ENCODE measurements at regions of chr1 and their contacts with region 1.

Region 1: GRCh38 chr1:161427733-161428516 is 60.2 kb upstream of the CFAP126 start:
- DNase-seq: peak; percentile 72
- ATAC-seq: peak; percentile 92
- H3K4me3 ChIP-seq: peak overlapping the region; percentile 62
- H3K27ac ChIP-seq: no peak overlapping the region
- H3K4me1 ChIP-seq: no peaks in the 10 kb centered on the region
- H3K27me3 ChIP-seq: no peaks in the 10 kb centered on the region
- CTCF ChIP-seq: no peak
- EP300 ChIP-seq: no peak; a peak in 1 of 4 replicates
- POLR2A ChIP-seq: no peak
- RAD21 ChIP-seq: no peak

Region 2: DNA sequence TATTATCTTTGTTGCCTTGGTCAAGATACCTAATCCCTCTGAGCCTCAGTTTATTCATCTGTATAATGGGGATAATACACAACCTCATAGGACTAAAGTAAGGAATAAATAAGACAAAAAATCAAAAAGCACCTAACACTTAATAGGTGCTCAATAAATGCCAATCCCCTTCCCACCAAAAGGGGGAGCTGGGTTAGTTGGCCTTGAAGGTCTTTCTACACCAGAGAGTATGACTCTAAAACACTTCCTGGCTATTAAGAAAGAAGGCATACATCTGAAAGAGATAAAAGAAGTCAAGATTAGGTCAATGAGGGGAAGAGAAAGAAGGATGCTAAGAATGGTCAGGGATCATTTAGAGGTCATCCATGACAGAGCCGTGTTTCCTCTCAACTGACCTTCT is 1576.5 kb before region 1 on chr1:
- CTCF ChIA-PET with region 1: no interaction called
- POLR2A ChIA-PET with region 1: no interaction called
- RAD21 ChIA-PET with region 1: no interaction called
- SMC1A ChIA-PET with region 1: no interaction called
- in situ Hi-C with region 1: no loop called
- intact Hi-C with region 1: no loop called
- DNase-seq: no peak
- ATAC-seq: no peak
- H3K4me3 ChIP-seq: no peak overlapping the region
- H3K27ac ChIP-seq: no peak overlapping the region
- H3K4me1 ChIP-seq: no peaks in the 10 kb centered on the region
- H3K27me3 ChIP-seq: peaks cover 2 to 8% of the 10 kb centered on the region in 2 experiments; a peak in 3 of 4 replicates
- CTCF ChIP-seq: peak in 1 of 3 experiments; percentile 7; a peak in 1 of 6 replicates
- EP300 ChIP-seq: no peak
- POLR2A ChIP-seq: no peak
- RAD21 ChIP-seq: no peak

Region 3: DNA sequence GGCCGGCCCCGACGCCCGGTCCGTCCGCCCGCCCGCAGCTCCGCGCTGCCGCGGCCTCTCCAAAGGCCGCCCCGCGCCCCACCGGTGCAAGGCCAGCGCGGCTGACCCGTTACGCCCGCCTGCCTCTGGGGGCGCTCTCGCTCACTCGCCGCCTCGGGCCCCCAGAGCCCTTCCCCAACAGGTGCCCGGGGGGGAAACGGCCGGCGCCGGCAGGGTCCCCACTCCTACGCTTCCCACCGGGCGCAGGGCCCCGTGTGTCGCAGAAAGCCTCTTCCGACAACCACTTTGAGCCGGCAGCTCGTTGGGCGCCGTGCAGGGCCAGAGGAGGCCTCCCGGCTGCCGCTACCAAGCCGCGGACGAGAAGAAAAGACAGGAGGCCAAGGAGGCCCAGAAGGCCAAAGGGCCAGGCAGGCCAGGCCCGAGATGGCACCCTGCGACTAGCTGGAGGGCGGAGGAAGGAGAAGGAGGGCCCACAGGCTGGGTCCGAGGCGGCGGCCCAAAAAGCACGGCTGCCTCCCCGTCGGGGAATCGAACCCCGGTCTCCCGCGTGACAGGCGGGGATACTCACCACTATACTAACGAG is 12.5 kb after region 1 on chr1:
- CTCF ChIA-PET with region 1: interaction called, 36 read pairs
- POLR2A ChIA-PET with region 1: no interaction called
- RAD21 ChIA-PET with region 1: no interaction called
- SMC1A ChIA-PET with region 1: interaction called, 3 read pairs
- in situ Hi-C with region 1: no loop called
- intact Hi-C with region 1: no loop called
- DNase-seq: peak; percentile 23
- ATAC-seq: peak; percentile 80
- H3K4me3 ChIP-seq: peak overlapping the region; percentile 71
- H3K27ac ChIP-seq: peak overlapping the region; percentile 61
- H3K4me1 ChIP-seq: peaks cover 5% of the 10 kb centered on the region
- H3K27me3 ChIP-seq: no peaks in the 10 kb centered on the region
- CTCF ChIP-seq: peak; percentile 56 to 84 (median 77)
- EP300 ChIP-seq: no peak
- POLR2A ChIP-seq: peak; percentile 44; the same call in 1 of the 2 replicates
- RAD21 ChIP-seq: 0 out of 2 replicates have a peak, but pooled peaks have one; percentile 25